Activated B cell treated with CpG ODN at 0.5 μM for 24 hours (primary cell): ENCODE measurements at regions of chr9 and their contacts with region 1.

Region 1: GRCh38 chr9:99231711-99232110 is 9.6 kb downstream of the SEC61B start:
- DNase-seq: peak; percentile 46
- ATAC-seq: peak; percentile 11
- H3K4me3 Mint-ChIP-seq: peak overlapping the region; percentile 47
- H3K27ac Mint-ChIP-seq: peak overlapping the region; percentile 65
- H3K4me1 Mint-ChIP-seq: peaks cover 45% of the 10 kb centered on the region
- H3K27me3 Mint-ChIP-seq: no peaks in the 10 kb centered on the region
- CTCF ChIP-seq: no peak

Region 2: DNA sequence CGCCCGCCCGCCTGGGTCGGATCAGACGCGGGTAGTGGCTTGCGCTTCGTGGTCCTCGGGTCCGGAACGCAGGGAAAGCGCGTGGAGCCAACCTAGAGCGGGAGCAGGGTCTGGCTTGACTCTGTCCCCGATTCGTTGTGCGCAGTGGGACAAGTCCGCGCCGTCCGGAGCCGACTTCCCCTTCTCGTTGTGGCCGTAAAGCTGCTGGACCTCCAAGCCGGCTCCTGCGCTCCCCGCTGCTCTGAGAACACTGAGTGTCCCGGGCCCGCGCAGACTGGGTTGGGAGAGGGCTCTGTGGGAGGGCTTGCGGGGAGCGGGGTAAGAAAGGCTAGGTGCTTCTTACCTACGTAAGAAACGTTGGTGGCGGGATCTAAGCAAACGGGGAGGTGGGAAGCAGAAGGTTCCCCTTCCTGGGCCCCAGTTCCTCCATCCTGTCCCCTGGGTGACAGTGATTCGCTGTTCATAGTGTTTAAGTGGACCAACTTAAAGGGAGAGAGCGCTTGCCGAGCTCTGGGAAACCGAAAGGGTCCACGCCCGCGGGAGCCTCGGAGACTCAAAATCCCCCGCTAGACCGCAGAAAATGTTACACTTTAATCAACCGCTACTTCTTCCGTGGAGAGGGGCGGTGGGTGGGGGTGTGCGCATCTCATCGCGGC is 1383.0 kb before region 1 on chr9:
- CTCF ChIA-PET with region 1: no interaction called
- POLR2A ChIA-PET with region 1: no interaction called
- intact Hi-C with region 1: no loop called
- DNase-seq: no peak
- ATAC-seq: no peak
- H3K4me3 Mint-ChIP-seq: peak overlapping the region; percentile 81
- H3K27ac Mint-ChIP-seq: no peak overlapping the region
- H3K4me1 Mint-ChIP-seq: peaks cover 26% of the 10 kb centered on the region
- H3K27me3 Mint-ChIP-seq: peaks cover 63% of the 10 kb centered on the region
- CTCF ChIP-seq: no peak

Region 3: DNA sequence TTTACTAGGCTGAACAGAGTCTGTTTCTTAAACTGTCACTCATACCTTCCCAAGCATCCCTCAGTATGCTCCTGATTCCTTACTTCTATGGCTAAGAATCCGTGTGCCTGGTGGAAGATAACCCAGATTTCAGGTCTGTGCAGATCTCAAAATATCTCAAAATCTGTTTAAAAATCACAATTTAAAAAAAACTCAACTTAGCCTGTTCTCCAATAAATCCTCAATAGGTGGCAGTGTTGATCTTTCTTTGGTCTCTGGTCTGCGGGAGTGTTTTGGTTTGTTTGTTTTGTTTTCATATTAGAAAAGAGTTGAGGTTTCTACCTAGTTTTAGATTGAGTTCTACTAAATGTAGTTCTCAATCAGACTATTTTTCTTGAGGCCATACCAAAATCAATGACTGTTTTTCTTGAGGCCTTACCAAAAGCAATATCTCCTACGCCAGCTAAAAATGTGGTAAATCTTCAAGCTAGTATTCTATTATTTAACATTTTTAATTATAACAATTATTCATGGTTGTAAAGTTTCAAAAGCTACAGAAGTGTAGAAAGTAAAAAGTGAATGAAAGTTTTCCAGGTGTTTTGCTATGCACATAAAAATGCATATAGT is 68.8 kb before region 1 on chr9:
- CTCF ChIA-PET with region 1: interaction called, 20 read pairs
- POLR2A ChIA-PET with region 1: interaction called, 7 read pairs
- intact Hi-C with region 1: loop called (anchors 1 kb)
- DNase-seq: no peak
- ATAC-seq: peak; percentile 55
- H3K4me3 Mint-ChIP-seq: no peak overlapping the region
- H3K27ac Mint-ChIP-seq: peak overlapping the region; percentile 66
- H3K4me1 Mint-ChIP-seq: peaks cover 45% of the 10 kb centered on the region
- H3K27me3 Mint-ChIP-seq: no peaks in the 10 kb centered on the region
- CTCF ChIP-seq: peak; percentile 22

Region 4: DNA sequence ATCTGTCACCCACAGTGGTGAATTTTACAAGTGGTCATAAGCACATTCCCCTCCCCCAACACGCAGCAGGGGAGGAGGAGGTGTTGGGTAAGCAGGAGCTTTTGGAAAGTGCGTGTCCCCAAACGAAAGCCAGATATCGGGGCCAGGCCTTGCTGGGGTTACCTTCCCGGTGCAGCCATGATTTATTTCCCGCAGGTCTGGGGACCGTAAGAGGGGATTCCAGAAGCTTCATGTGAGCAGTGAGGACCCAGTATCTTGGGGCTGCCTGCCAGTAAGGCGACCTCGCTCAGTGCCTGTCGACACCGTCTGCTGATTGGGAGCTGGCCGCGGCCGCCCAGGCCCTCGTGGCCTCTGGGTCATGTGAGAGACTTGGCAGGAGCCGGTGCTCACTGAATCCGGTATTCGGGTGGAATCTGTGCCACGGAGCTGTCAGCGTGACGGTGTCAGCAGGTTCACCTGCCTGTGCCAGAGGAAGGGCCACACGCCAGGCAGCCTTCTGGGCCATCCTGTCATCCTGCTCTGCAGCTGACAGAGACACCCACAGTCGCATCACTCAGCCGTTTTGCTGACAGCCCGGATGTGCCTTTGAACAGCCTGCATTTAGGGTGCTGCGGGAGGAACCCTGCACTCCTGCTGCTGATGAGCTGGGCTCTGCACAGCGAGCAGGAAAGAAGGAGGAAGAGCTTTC is 27.7 kb after region 1 on chr9:
- CTCF ChIA-PET with region 1: interaction called, 73 read pairs
- POLR2A ChIA-PET with region 1: interaction called, 27 read pairs
- intact Hi-C with region 1: no loop called
- DNase-seq: peak; percentile 19
- ATAC-seq: peak; percentile 60
- H3K4me3 Mint-ChIP-seq: no peak overlapping the region
- H3K27ac Mint-ChIP-seq: peak overlapping the region; percentile 67
- H3K4me1 Mint-ChIP-seq: peaks cover 57% of the 10 kb centered on the region
- H3K27me3 Mint-ChIP-seq: no peaks in the 10 kb centered on the region
- CTCF ChIP-seq: no peak

Region 5: GRCh38 chr9:99340281-99340680 is 108.6 kb after region 1 on chr9:
- CTCF ChIA-PET with region 1: interaction called, 3 read pairs
- POLR2A ChIA-PET with region 1: no interaction called
- intact Hi-C with region 1: loop called (anchors 5 kb)
- DNase-seq: no peak
- ATAC-seq: no peak
- H3K4me3 Mint-ChIP-seq: no peak overlapping the region
- H3K27ac Mint-ChIP-seq: no peak overlapping the region
- H3K4me1 Mint-ChIP-seq: no peaks in the 10 kb centered on the region
- H3K27me3 Mint-ChIP-seq: no peaks in the 10 kb centered on the region
- CTCF ChIP-seq: no peak

Region 6: DNA sequence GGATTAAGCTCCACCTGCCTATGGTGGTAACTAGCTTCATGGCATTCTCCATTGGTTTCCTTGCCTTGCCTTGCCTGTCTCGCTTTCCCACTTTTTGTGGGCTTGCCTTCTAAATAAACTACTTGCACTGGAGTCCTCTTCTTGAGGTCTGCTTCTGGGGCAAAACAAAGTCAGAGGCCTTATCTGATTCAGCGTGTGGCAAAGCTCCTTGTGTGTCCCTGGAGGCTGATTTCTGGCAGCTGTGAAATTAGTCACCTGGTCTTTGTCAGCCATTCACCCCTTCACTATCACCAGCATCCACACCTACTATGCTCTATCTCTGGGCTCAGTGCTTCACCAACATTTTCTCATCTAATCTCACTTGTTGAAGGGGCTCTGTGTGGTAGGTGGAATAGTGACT is 166.5 kb after region 1 on chr9:
- CTCF ChIA-PET with region 1: no interaction called
- POLR2A ChIA-PET with region 1: no interaction called
- intact Hi-C with region 1: no loop called
- DNase-seq: no peak
- ATAC-seq: no peak
- H3K4me3 Mint-ChIP-seq: no peak overlapping the region
- H3K27ac Mint-ChIP-seq: no peak overlapping the region
- H3K4me1 Mint-ChIP-seq: no peaks in the 10 kb centered on the region
- H3K27me3 Mint-ChIP-seq: no peaks in the 10 kb centered on the region
- CTCF ChIP-seq: no peak

Region 7: DNA sequence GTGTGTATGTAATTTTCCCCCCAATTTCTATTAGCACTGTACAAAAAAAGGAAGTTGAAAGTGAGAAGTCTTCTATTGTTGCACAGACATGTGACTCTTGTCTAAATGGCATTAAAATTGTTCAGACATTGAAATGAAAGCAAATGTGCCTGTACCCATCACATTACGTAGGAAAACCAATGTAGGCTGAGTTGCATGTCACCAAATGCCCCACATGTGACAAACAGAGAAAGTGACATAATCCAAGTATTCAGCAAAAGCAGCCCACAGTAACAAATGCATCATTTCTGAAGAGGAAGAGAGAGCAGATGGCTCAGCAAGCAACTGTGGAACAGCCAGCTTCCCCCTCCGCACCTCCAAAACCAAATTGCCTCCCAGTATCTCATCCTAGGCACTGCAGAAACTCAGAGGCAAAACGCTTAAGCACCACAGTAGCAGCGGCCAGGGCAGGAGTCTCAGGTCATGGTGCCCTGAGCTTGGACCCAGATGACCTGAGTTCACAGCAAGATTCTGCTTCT is 428.5 kb after region 1 on chr9:
- CTCF ChIA-PET with region 1: no interaction called
- POLR2A ChIA-PET with region 1: no interaction called
- intact Hi-C with region 1: loop called (anchors 1 kb)
- DNase-seq: peak; percentile 30
- ATAC-seq: peak; percentile 91
- H3K4me3 Mint-ChIP-seq: peak overlapping the region; percentile 21
- H3K27ac Mint-ChIP-seq: peak overlapping the region; percentile 92
- H3K4me1 Mint-ChIP-seq: peaks cover 31% of the 10 kb centered on the region
- H3K27me3 Mint-ChIP-seq: no peaks in the 10 kb centered on the region
- CTCF ChIP-seq: no peak

Region 8: GRCh38 chr9:100084734-100085133 is 853.0 kb after region 1 on chr9:
- CTCF ChIA-PET with region 1: no interaction called
- POLR2A ChIA-PET with region 1: no interaction called
- intact Hi-C with region 1: loop called (anchors 2 kb)
- DNase-seq: no peak
- ATAC-seq: peak; percentile 65
- H3K4me3 Mint-ChIP-seq: peak overlapping the region; percentile 78
- H3K27ac Mint-ChIP-seq: peak overlapping the region; percentile 94
- H3K4me1 Mint-ChIP-seq: peaks cover 87% of the 10 kb centered on the region
- H3K27me3 Mint-ChIP-seq: no peaks in the 10 kb centered on the region
- CTCF ChIP-seq: no peak